GM10248 (cell line): ENCODE measurements at regions of chr22 and their contacts with region 1.

Region 1: GRCh38 chr22:32080904-32081303 is 37.8 kb downstream of the SLC5A1 start:
- DNase-seq: peak; percentile 53
- CTCF ChIP-seq: peak; percentile 70

Region 2: DNA sequence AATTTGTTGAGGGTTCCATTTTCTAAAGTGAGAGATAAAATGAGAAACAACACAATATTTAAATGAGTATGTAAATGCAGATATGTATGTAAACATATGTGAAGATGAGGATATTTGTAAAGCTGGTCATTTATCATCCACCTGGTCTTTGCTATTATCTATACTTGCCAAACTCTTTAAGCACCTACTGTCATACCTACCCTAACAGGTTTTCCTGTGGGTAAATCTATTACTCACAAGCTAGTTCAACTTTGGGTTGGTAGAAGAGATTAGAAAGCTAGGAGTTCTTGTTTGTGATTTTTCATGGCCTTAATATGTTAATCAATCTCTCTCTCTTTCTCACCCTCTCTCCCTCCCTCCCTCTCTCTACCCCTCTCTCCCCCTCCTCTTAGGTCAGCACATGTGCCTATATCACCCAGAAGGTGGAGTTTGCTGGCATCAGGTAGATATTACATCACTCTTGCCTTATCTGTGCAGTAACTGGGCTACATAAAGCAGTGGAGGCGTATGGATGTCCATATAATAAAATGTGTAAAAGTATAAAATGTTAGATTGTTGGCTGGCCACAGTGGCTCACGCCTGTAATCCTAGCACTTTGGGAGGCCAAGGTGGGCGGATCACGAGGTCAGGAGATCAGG is 312.4 kb before region 1 on chr22:
- CTCF ChIA-PET with region 1: no interaction called
- POLR2A ChIA-PET with region 1: no interaction called
- DNase-seq: no peak
- CTCF ChIP-seq: no peak

Region 3: GRCh38 chr22:31970490-31971444 is 110.1 kb before region 1 on chr22:
- CTCF ChIA-PET with region 1: interaction called, 40 read pairs
- POLR2A ChIA-PET with region 1: no interaction called
- DNase-seq: peak; percentile 93
- CTCF ChIP-seq: peak; percentile 94

Region 4: DNA sequence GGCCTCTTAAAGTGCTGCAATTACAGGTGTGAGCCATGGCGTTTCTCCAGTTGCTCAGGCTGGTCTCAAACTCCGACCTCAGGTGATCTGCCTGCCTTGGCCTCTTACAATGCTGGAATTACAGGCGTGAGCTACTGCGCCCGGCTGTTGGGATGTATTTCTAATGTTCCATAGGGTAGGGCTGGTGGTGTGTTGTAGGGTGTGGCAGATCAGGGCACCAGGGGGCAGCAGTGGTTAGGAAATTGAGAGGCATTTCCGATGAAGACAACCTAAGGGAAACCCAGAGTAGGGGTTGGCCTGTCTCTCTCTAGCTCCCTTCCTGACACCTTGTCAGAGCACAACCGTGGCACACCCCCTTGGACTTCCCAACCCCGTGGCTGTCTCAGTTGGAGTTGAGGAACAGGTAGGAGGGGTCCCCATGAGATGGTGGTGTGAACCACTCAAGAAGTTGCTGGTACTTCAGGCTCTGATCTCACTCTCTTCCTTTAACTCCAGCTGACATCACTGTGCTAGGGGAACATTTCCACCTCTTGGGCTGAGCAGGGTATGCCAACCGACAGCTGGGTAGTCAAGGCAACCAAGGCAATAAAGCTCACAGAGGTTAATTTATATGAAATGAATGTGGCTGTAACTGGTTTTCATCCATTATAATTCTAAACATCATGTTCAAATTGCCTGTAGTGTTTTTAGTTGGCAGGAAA is 103.6 kb before region 1 on chr22:
- CTCF ChIA-PET with region 1: interaction called, 40 read pairs
- POLR2A ChIA-PET with region 1: no interaction called
- DNase-seq: peak; percentile 79
- CTCF ChIP-seq: peak; percentile 74

Region 5: GRCh38 chr22:31995046-31995445 is 85.9 kb before region 1 on chr22:
- CTCF ChIA-PET with region 1: interaction called, 10 read pairs
- POLR2A ChIA-PET with region 1: no interaction called
- DNase-seq: no peak
- CTCF ChIP-seq: no peak